T-cell (primary cell): ENCODE measurements at regions of chr17 and their contacts with region 1.

Region 1: DNA sequence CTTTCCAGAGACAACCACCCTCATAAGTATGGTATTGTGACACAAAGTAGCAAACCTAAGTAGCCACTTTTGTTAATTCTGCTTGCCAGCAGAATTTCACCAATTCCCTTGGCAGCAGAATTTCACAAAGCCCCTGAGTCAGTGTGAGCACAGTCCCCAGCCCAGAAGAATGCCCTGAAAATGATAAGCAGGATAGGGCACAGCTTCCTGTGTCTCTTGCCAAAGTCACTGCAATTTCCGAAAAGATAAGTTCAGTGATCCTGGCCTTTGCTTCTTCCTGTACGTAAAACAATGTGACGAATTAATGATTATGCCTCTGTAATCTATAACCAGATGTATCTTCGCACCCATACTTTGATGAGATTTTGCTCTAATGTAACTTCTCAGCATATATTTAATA is 16.0 kb upstream of the WIPF2 start:
- DNase-seq: no peak
- ATAC-seq: no peak
- H3K4me3 ChIP-seq: no peak overlapping the region
- H3K4me3 Mint-ChIP-seq: no peak overlapping the region
- H3K27ac ChIP-seq: no peak overlapping the region
- H3K27ac Mint-ChIP-seq: no peak overlapping the region
- H3K4me1 ChIP-seq: peaks cover 0 to 5% of the 10 kb centered on the region in 2 experiments
- H3K4me1 Mint-ChIP-seq: peaks cover 0 to 4% (median 0%) of the 10 kb centered on the region in 3 donors
- H3K27me3 ChIP-seq: peaks cover 0 to 13% of the 10 kb centered on the region in 2 experiments
- H3K27me3 Mint-ChIP-seq: peaks cover 3 to 12% of the 10 kb centered on the region in 2 donors

Region 2: DNA sequence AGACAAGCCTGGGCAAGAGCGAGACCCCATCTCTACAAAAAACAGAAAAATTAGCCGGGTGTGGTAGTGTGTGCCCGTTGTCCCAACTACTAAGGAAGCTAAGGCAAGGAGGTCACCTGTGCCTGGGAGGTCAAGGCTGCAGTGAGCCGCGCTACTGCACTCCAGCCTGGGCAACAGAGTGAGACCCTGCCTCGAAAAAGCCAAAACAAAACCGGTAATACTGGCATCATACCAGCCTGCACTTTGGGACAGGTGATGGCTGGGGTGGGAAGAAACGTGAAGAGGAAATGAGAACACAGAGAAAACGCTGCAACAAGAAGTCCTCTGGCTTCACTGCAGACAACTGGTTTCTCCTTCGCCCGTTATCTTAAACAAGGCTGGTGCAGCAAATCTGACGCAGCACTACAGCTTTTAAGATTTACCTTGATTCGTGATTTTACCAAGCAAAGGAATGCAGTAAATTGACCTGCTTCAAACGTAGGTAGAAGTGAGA is 63.5 kb before region 1 on chr17:
- CTCF ChIA-PET with region 1: no interaction called
- POLR2A ChIA-PET with region 1: interaction called in 1 of 2 experiments, 14 read pairs
- DNase-seq: peak in 1 of 35 experiments; percentile 15
- ATAC-seq: peak in 3 of 4 experiments; percentile 5 to 6 (median 5)
- H3K4me3 ChIP-seq: peak overlapping the region; percentile 60 to 78
- H3K4me3 Mint-ChIP-seq: peak overlapping the region; percentile 89 to 92 (median 89)
- H3K27ac ChIP-seq: peak overlapping the region; percentile 94
- H3K27ac Mint-ChIP-seq: peak overlapping the region; percentile 96 to 98
- H3K4me1 ChIP-seq: peaks cover 12 to 35% of the 10 kb centered on the region in 2 experiments
- H3K4me1 Mint-ChIP-seq: peaks cover 30 to 44% (median 41%) of the 10 kb centered on the region in 3 donors
- H3K27me3 ChIP-seq: no peaks in the 10 kb centered on the region
- H3K27me3 Mint-ChIP-seq: no peaks in the 10 kb centered on the region